IMR-90 (cell line): ENCODE measurements at regions of chr3 and their contacts with region 1.

Region 1: DNA sequence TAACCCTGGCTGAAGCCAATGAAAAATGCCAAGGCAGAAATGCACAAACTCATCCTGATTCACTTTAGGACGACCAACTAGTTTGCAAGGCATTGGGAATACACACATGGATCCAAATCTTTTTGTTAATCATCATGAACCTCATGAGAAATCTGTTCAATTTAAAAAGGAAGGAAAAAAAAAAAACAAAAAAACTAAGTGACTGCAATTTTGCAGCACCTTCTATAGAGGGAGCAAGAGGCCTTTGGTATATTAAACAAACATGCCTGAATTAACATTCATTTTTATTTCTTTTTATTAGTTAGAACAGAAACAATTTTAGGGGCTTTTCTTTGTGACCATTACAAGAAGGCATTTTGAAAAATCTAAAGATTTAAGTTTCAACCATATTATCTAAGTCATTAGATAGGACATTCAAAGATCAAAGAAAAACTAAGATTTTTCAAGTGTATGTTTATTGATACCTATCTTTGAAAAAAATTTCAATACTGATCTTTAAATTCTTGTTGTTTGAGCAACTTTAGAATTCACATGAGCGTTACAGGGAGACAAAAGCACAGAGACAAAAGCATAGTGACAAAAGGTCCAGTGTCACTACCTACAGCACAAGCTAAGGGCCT is 182.4 kb downstream of the CBLB start:
- DNase-seq: peak; percentile 54
- ATAC-seq: peak; percentile 60; the same call in 1 of the 2 replicates
- H3K4me3 ChIP-seq: no peak overlapping the region
- H3K27ac ChIP-seq: no peak overlapping the region
- H3K4me1 ChIP-seq: peaks cover 2% of the 10 kb centered on the region; the same call in 1 of the 2 replicates
- H3K27me3 ChIP-seq: no peaks in the 10 kb centered on the region
- CTCF ChIP-seq: peak; percentile 83
- POLR2A ChIP-seq: no peak
- RAD21 ChIP-seq: peak; percentile 87

Region 2: GRCh38 chr3:105938101-105938500 is 251.7 kb after region 1 on chr3:
- CTCF ChIA-PET with region 1: no interaction called
- POLR2A ChIA-PET with region 1: no interaction called
- dilution Hi-C with region 1: no loop called
- in situ Hi-C with region 1: no loop called
- intact Hi-C with region 1: loop called (anchors 10 kb)
- DNase-seq: peak; percentile 45
- ATAC-seq: peak; percentile 85
- H3K4me3 ChIP-seq: peak overlapping the region; percentile 34; the same call in 1 of the 2 replicates
- H3K27ac ChIP-seq: peak overlapping the region; percentile 5; the same call in 1 of the 2 replicates
- H3K4me1 ChIP-seq: no peaks in the 10 kb centered on the region
- H3K27me3 ChIP-seq: no peaks in the 10 kb centered on the region
- CTCF ChIP-seq: no peak
- POLR2A ChIP-seq: no peak
- RAD21 ChIP-seq: no peak

Region 3: DNA sequence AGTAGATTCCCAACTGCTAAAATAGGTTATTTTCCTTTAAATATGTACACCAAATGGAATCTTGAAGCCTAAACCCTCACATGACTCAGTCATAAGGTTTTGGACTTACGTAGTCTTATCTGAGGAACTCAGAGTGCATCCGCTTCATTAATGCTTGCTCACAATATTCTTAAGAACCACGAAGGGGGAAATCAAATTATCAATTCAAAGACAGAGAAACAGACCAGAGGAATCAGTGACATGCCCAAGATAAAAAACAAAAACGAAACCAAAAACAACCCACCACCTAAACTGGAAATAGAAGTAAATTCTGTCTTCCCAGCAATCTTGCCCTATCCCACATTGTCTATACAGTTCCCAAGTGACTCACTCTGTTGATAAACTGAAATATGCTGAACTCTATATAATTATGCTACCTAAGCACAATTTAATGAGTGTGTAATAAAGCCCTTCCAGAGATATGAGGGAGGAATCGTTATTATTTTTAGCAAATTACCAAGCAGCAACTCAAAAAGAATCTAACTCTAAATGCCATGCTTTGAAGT is 317.8 kb after region 1 on chr3:
- CTCF ChIA-PET with region 1: no interaction called
- POLR2A ChIA-PET with region 1: no interaction called
- dilution Hi-C with region 1: no loop called
- in situ Hi-C with region 1: no loop called
- intact Hi-C with region 1: loop called (anchors 10 kb)
- DNase-seq: peak; percentile 91
- ATAC-seq: peak; percentile 83
- H3K4me3 ChIP-seq: peak overlapping the region; percentile 75; the same call in 1 of the 2 replicates
- H3K27ac ChIP-seq: peak overlapping the region; percentile 29; the same call in 1 of the 2 replicates
- H3K4me1 ChIP-seq: peaks cover 4% of the 10 kb centered on the region
- H3K27me3 ChIP-seq: no peaks in the 10 kb centered on the region
- CTCF ChIP-seq: no peak
- POLR2A ChIP-seq: no peak
- RAD21 ChIP-seq: no peak

Region 4: DNA sequence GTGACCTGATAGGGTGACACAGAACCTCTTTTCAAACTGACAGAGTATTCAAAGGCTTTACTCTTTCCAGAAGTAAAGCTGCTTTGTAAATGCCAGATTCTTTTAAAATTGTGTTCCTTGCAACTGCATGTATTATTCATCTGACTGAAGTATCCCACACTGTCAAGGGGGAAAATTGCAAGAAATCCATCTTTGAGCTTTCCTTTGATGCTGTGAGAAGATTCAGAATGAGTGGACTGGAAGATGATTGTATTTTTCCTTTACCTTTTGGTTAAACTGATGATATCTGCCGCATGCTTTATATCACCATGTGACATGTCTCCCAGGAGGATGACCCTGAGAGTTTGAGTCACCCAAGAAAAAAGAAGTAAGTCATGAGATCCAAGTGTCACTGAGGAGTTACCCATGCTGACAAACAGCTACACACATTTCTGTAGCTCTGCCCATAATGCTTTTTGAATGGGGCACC is 433.3 kb after region 1 on chr3:
- CTCF ChIA-PET with region 1: no interaction called
- POLR2A ChIA-PET with region 1: no interaction called
- dilution Hi-C with region 1: no loop called
- in situ Hi-C with region 1: no loop called
- intact Hi-C with region 1: loop called (anchors 10 kb)
- DNase-seq: peak; percentile 63
- ATAC-seq: peak; percentile 14; the same call in 1 of the 2 replicates
- H3K4me3 ChIP-seq: no peak overlapping the region
- H3K27ac ChIP-seq: no peak overlapping the region
- H3K4me1 ChIP-seq: peaks cover 3% of the 10 kb centered on the region; the same call in 1 of the 2 replicates
- H3K27me3 ChIP-seq: no peaks in the 10 kb centered on the region
- CTCF ChIP-seq: no peak
- POLR2A ChIP-seq: no peak
- RAD21 ChIP-seq: no peak

Region 5: DNA sequence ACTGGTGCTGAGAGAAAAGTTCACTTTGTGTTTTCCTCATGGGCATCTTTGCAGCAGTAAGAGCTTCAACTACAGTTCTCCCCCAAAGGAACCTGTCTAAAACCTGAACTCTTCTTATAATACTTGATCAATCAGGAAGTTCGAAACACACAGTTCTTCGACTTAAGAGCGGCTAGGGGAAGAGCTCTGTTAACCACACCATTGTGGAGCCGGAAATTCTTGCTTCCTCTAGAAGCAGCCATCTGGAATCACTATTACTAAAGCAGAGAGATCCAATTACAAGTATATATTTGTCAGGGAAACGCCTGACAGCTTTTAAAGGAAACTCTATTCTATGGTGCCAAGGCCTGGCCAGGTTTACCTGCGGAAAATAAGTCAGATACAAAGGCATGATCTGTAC is 519.8 kb after region 1 on chr3:
- CTCF ChIA-PET with region 1: no interaction called
- POLR2A ChIA-PET with region 1: no interaction called
- dilution Hi-C with region 1: no loop called
- in situ Hi-C with region 1: no loop called
- intact Hi-C with region 1: loop called (anchors 10 kb)
- DNase-seq: peak; percentile 36
- ATAC-seq: peak; percentile 42; the same call in 1 of the 2 replicates
- H3K4me3 ChIP-seq: no peak overlapping the region
- H3K27ac ChIP-seq: no peak overlapping the region
- H3K4me1 ChIP-seq: no peaks in the 10 kb centered on the region
- H3K27me3 ChIP-seq: no peaks in the 10 kb centered on the region
- CTCF ChIP-seq: no peak
- POLR2A ChIP-seq: no peak
- RAD21 ChIP-seq: no peak

Region 6: DNA sequence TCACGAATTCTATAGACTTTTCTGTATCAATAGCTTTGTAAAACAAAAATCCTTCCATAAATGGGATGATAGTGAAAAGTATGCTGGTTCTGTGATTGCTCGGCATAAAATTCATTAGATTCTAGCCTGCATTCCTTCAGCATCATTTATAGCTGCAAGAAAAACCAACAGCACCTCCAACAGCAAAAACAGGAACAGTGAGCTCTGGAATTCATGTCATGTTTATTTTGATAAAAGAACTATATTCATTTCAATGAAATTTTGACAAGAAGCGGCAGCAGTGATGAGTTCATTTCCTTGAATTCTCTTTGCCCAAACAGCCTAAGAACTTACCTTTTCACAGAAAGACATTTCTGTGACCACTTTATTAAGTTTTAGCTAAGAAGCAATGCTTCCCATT is 1175.7 kb after region 1 on chr3:
- CTCF ChIA-PET with region 1: interaction called, 4 read pairs
- POLR2A ChIA-PET with region 1: no interaction called
- dilution Hi-C with region 1: no loop called
- in situ Hi-C with region 1: no loop called
- intact Hi-C with region 1: loop called (anchors 5 kb)
- DNase-seq: peak; percentile 70
- ATAC-seq: peak; percentile 91
- H3K4me3 ChIP-seq: no peak overlapping the region
- H3K27ac ChIP-seq: no peak overlapping the region
- H3K4me1 ChIP-seq: 0 out of 2 replicates have a peak, but pooled peaks cover 1% of the 10 kb centered on the region
- H3K27me3 ChIP-seq: no peaks in the 10 kb centered on the region
- CTCF ChIP-seq: peak; percentile 55
- POLR2A ChIP-seq: no peak
- RAD21 ChIP-seq: peak; percentile 69